ENCODE measurements at regions of chr12 and their contacts with region 1.

Region 1: DNA sequence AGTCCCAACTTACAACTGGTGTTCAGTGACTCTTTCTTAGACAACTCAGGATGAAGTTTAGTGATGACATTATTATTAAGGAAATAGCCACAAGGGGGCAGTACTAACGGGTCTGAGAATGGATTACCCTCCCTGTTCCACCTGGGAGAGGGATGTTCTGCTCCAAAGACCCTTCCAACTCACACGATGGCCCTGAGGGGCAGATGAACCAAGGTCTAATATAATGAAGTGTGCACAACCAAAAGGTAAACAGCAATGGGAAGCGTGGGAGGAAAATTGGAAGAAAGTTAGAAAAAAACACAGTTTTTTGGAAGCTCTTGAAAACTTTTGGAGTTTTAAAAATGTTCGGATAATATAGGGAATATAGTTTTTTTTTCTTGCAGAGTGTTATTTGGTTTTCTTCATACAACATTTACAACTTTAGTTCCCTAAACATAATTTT is 24.0 kb downstream of the FGF6 start:
- DNase-seq: no peak
- H3K4me3 ChIP-seq: no peak overlapping the region
- H3K27ac ChIP-seq: no peak overlapping the region
- H3K4me1 ChIP-seq: peaks cover 0 to 27% (median 20%) of the 10 kb centered on the region in 4 donors
- H3K27me3 ChIP-seq: no peaks in the 10 kb centered on the region
- CTCF ChIP-seq: peak in 2 of 4 experiments; percentile 36 to 51
- EP300 ChIP-seq: no peak
- POLR2A ChIP-seq: no peak

Region 2: GRCh38 chr12:4307593-4308333 is 113.8 kb before region 1 on chr12:
- intact Hi-C with region 1: loop called (anchors 5 kb)
- DNase-seq: peak; percentile 89
- H3K4me3 ChIP-seq: peak overlapping the region in 3 of 4 donors; percentile 3 to 10 (median 4)
- H3K27ac ChIP-seq: peak overlapping the region; percentile 10 to 76 (median 54)
- H3K4me1 ChIP-seq: peaks cover 0 to 60% (median 41%) of the 10 kb centered on the region in 4 donors
- H3K27me3 ChIP-seq: no peaks in the 10 kb centered on the region
- CTCF ChIP-seq: peak; percentile 68 to 79 (median 76)
- EP300 ChIP-seq: no peak
- POLR2A ChIP-seq: no peak

Region 3: DNA sequence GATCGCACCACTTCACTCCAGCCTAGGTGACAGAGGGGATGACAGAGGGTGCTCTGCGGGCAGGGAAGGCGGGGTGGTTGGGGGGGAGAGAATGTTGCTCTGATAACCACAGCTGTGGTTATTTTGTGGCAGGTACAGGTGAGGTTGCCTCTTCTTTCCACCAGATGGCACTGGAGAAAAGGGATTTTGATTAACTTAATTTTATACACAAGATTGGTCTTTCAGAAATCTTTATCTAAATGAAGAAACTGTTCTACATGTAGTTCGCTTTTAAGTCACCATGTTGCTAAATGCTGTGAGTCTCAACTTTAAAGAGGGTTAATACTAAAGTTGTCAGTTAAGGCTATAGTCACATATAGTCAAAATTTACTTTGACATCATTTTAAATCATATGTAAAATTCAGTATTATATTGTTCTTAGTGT is 67.8 kb before region 1 on chr12:
- intact Hi-C with region 1: loop called (anchors 5 kb)
- DNase-seq: no peak
- H3K4me3 ChIP-seq: no peak overlapping the region
- H3K27ac ChIP-seq: no peak overlapping the region
- H3K4me1 ChIP-seq: no peaks in the 10 kb centered on the region
- H3K27me3 ChIP-seq: no peaks in the 10 kb centered on the region
- CTCF ChIP-seq: peak in 3 of 4 experiments; percentile 44 to 55 (median 50)
- EP300 ChIP-seq: no peak
- POLR2A ChIP-seq: no peak

Region 4: DNA sequence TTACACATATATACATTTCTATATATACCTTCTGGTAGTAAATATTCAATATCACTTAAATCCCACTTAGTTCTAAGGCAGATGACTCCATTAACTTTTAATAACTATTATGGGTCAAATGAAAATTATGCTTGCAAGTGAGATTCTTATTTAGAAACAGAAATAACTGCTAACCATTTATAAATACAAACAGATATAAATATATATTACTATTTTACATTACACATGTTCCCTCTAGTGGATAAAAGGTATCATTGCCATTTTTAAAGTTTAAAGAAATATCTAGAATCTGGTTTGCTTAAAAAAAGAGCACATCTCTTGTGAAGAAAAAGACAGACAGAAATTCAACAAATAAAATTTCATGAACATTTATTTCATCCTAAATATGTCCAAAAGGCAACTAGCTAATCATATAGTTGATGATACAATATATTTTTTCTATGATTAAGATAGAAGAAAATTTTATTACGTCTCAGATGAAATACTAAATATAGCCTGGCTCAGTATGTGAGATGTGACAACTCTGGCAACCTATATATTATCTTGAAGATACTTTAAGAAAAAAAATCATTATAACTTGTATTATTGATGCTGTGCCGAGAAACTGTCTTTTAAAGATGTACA is 105.4 kb after region 1 on chr12:
- intact Hi-C with region 1: loop called (anchors 5 kb)
- DNase-seq: no peak
- H3K4me3 ChIP-seq: no peak overlapping the region
- H3K27ac ChIP-seq: no peak overlapping the region
- H3K4me1 ChIP-seq: no peaks in the 10 kb centered on the region
- H3K27me3 ChIP-seq: no peaks in the 10 kb centered on the region
- CTCF ChIP-seq: peak in 3 of 4 experiments; percentile 34 to 60 (median 51)
- EP300 ChIP-seq: no peak
- POLR2A ChIP-seq: no peak

Region 5: DNA sequence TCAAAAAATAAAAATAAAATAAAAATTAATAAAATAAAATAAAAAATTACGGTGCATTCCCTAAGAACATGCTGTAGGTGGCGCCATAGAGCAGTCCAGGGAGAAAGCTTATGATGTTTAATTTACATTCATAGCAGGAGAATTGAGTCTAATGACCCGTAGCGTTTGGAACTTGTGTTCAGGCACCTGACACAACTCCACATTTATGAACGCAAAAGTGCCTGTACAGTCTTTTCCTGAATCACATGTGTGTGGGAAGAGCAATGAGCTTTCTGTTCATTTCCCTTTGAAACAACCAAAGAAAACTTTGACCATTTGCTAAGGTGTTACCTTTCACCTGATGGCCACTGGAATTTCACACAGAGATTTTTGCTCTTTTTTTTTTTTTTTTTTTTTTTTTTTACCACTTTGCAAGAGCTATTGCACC is 427.5 kb after region 1 on chr12:
- intact Hi-C with region 1: no loop called
- DNase-seq: no peak
- H3K4me3 ChIP-seq: no peak overlapping the region
- H3K27ac ChIP-seq: no peak overlapping the region
- H3K4me1 ChIP-seq: no peaks in the 10 kb centered on the region
- H3K27me3 ChIP-seq: no peaks in the 10 kb centered on the region
- CTCF ChIP-seq: peak in 3 of 4 experiments; percentile 44 to 77 (median 52)
- EP300 ChIP-seq: no peak
- POLR2A ChIP-seq: no peak

Measured in sigmoid colon (tissue), 7 donors.